CD8-positive, alpha-beta T cell (primary cell): ENCODE measurements at regions of chr10 and their contacts with region 1.

Region 1: GRCh38 chr10:31799181-31799580 is 129.4 kb downstream of the ARHGAP12 start:
- DNase-seq: no peak
- ATAC-seq: no peak
- H3K4me3 ChIP-seq: no peak overlapping the region
- H3K4me3 Mint-ChIP-seq: no peak overlapping the region
- H3K27ac ChIP-seq: no peak overlapping the region
- H3K27ac Mint-ChIP-seq: no peak overlapping the region
- H3K4me1 ChIP-seq: no peaks in the 10 kb centered on the region
- H3K4me1 Mint-ChIP-seq: no peaks in the 10 kb centered on the region
- H3K27me3 ChIP-seq: no peaks in the 10 kb centered on the region
- H3K27me3 Mint-ChIP-seq: no peaks in the 10 kb centered on the region
- CTCF ChIP-seq: no peak

Region 2: DNA sequence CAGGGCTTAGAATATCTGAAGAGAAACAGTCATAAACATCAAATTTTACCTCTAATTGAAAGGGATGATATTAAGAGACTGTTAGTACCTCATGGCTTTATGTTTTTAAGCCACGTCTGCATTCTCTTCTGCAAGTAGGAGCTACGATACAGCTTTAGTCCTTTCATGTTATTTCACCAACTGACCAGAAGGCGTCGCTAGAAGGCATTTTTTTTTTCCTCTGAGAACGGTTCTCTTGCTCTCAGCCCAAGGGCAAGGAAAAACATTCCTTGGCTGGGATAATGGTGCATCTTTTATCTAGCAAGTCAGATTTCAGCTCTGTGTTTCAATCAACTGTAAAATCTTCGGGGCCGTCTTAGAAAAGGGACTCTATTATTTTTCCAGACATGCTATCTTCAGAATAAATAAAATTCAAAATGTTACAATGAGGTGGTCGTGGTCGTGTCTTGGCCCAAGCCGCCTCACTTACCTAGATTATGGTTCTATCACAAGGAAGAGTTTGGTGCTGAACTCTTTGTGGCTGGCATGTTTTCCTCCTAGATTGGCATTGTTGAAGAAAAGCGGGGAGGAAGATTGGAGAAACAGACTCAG is 1128.1 kb before region 1 on chr10:
- CTCF ChIA-PET with region 1: interaction called, 3 read pairs
- POLR2A ChIA-PET with region 1: no interaction called
- intact Hi-C with region 1: loop called in 1 of 2 experiments (anchors 5 kb)
- DNase-seq: peak in 4 of 9 experiments; percentile 16 to 78 (median 48)
- ATAC-seq: peak; percentile 77
- H3K4me3 ChIP-seq: peak overlapping the region in 1 of 2 experiments; percentile 1
- H3K4me3 Mint-ChIP-seq: peak overlapping the region; percentile 63
- H3K27ac ChIP-seq: no peak overlapping the region
- H3K27ac Mint-ChIP-seq: no peak overlapping the region
- H3K4me1 ChIP-seq: no peaks in the 10 kb centered on the region
- H3K4me1 Mint-ChIP-seq: peaks cover 3% of the 10 kb centered on the region
- H3K27me3 ChIP-seq: peaks cover 0 to 3% of the 10 kb centered on the region in 2 experiments
- H3K27me3 Mint-ChIP-seq: peaks cover 2% of the 10 kb centered on the region
- CTCF ChIP-seq: peak; percentile 91